B cell (primary cell): ENCODE measurements at regions of chr9 and their contacts with region 1.

Region 1: DNA sequence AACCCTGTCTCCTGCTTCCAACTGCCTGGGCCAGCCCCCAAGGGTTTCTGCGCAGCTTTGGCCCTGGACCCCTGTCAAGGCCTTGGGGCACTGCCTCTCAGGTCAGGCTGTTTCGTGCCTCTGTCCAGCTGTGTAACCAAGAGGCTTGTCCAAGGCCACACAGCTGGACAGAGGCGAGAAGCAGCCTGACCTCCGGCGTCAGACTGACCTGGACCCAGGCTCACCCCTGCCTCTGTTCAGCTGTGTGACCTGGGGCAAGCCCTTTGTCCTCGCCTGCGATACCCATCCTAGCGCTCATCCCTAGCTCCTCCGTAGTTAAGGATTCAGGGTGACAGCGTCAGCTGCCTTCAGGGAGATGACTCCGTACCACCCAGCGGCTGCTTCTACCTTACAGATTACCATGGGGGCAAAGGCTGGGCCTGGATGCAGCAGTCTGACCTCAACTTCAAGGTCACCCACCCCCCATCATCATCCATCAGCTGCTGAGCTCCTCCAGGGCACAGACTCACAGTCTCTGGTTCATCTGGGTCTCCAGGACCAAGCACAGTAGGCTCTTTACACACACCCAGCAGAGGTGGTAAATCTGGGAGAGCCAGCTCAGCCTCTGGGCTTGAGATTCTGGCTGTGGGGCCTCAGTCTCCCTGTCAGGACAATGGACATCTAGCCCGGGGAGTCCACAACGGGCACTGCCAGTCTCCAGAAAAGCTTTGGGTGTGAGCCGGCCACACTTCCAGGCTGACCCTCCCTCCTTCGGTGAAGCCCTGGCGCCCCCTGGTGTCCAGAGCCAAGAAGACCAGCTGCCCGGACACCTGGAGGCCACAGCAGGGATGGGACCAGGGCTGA is 7.9 kb downstream of the AK1 start:
- DNase-seq: peak; percentile 85
- ATAC-seq: peak; percentile 76
- H3K4me3 ChIP-seq: no peak overlapping the region
- H3K4me3 Mint-ChIP-seq: no peak overlapping the region
- H3K27ac ChIP-seq: no peak overlapping the region
- H3K27ac Mint-ChIP-seq: peak overlapping the region; percentile 53
- H3K4me1 ChIP-seq: peaks cover 16 to 29% of the 10 kb centered on the region in 2 donors
- H3K4me1 Mint-ChIP-seq: peaks cover 25% of the 10 kb centered on the region
- H3K27me3 ChIP-seq: no peaks in the 10 kb centered on the region
- H3K27me3 Mint-ChIP-seq: no peaks in the 10 kb centered on the region
- CTCF ChIP-seq: peak; percentile 92

Region 2: GRCh38 chr9:126915281-126915816 is 954.2 kb before region 1 on chr9:
- CTCF ChIA-PET with region 1: no interaction called
- POLR2A ChIA-PET with region 1: no interaction called
- intact Hi-C with region 1: no loop called
- DNase-seq: peak; percentile 74
- ATAC-seq: peak; percentile 26
- H3K4me3 ChIP-seq: peak overlapping the region in 4 of 5 experiments; percentile 22 to 63 (median 42)
- H3K4me3 Mint-ChIP-seq: peak overlapping the region; percentile 79
- H3K27ac ChIP-seq: peak overlapping the region in 1 of 2 donors; percentile 24
- H3K27ac Mint-ChIP-seq: peak overlapping the region; percentile 72
- H3K4me1 ChIP-seq: peaks cover 3 to 13% of the 10 kb centered on the region in 2 donors
- H3K4me1 Mint-ChIP-seq: peaks cover 12% of the 10 kb centered on the region
- H3K27me3 ChIP-seq: peaks cover 0 to 3% (median 0%) of the 10 kb centered on the region in 4 experiments
- H3K27me3 Mint-ChIP-seq: peaks cover 15% of the 10 kb centered on the region
- CTCF ChIP-seq: no peak

Region 3: GRCh38 chr9:127715394-127716337 is 153.9 kb before region 1 on chr9 and contains the starts of genes PTRH1 and TTC16:
- CTCF ChIA-PET with region 1: interaction called, 11 read pairs
- POLR2A ChIA-PET with region 1: no interaction called
- intact Hi-C with region 1: no loop called
- DNase-seq: peak; percentile 98
- ATAC-seq: peak; percentile 95
- H3K4me3 ChIP-seq: peak within 1 kb of the TSS; percentile 16 to 90 (median 66)
- H3K4me3 Mint-ChIP-seq: peak within 1 kb of the TSS; percentile 97
- H3K27ac ChIP-seq: peak within 1 kb of the TSS; percentile 35 to 81
- H3K27ac Mint-ChIP-seq: peak within 1 kb of the TSS; percentile 90
- H3K4me1 ChIP-seq: peaks cover 9 to 16% of the 10 kb centered on the region in 2 donors
- H3K4me1 Mint-ChIP-seq: peaks cover 26% of the 10 kb centered on the region
- H3K27me3 ChIP-seq: no peaks in the 10 kb centered on the region
- H3K27me3 Mint-ChIP-seq: no peaks in the 10 kb centered on the region
- CTCF ChIP-seq: no peak
- total RNA-seq, gene PTRH1: 6.2 and 7.6 TPM in 2 replicates
- total RNA-seq, gene TTC16: not detected in 2 replicates

Region 4: DNA sequence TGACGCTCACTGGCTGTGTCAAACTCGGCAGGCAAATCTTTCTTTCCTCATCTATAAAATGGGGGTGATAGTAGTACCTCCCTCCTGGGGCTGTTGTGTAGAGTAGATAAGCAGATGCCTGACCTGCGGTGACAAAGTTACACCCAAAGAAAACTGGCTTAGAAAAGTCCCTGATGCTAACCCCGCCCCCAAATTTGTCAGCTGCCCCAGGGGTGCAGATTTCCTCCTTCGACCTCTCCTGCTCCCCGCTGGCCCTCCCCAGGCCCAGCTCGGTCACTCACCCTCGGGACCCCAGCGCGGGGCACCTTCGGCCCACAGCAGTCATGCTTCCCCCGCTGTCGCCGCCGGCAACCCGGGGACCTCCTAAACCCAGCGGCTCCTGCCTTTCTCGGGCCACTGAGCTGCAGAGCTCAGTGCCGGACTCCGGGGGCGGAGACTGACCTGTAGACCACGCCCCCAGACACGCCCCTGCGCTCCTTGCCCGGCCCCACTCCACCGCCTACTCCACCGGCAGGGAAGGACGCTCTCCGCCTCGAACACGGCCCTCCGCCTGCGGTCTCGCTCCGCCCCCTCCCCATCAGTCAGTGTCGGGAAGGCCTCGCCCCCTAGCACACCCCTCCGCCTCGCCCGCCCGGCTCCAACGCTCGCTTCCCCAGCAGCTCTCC is 98.5 kb before region 1 on chr9:
- CTCF ChIA-PET with region 1: interaction called, 28 read pairs
- POLR2A ChIA-PET with region 1: interaction called, 4 read pairs
- intact Hi-C with region 1: no loop called
- DNase-seq: peak; percentile 95
- ATAC-seq: peak; percentile 86
- H3K4me3 ChIP-seq: peak overlapping the region; percentile 43 to 73 (median 64)
- H3K4me3 Mint-ChIP-seq: peak overlapping the region; percentile 94
- H3K27ac ChIP-seq: peak overlapping the region; percentile 77 to 94
- H3K27ac Mint-ChIP-seq: peak overlapping the region; percentile 95
- H3K4me1 ChIP-seq: peaks cover 55 to 90% of the 10 kb centered on the region in 2 donors
- H3K4me1 Mint-ChIP-seq: peaks cover 68% of the 10 kb centered on the region
- H3K27me3 ChIP-seq: no peaks in the 10 kb centered on the region
- H3K27me3 Mint-ChIP-seq: no peaks in the 10 kb centered on the region
- CTCF ChIP-seq: no peak

Region 5: GRCh38 chr9:127796225-127796813 is 73.2 kb before region 1 on chr9:
- CTCF ChIA-PET with region 1: interaction called, 12 read pairs
- POLR2A ChIA-PET with region 1: interaction called, 7 read pairs
- intact Hi-C with region 1: no loop called
- DNase-seq: no peak
- ATAC-seq: peak; percentile 29
- H3K4me3 ChIP-seq: no peak overlapping the region
- H3K4me3 Mint-ChIP-seq: peak overlapping the region; percentile 67
- H3K27ac ChIP-seq: peak overlapping the region; percentile 32 to 33
- H3K27ac Mint-ChIP-seq: peak overlapping the region; percentile 89
- H3K4me1 ChIP-seq: peaks cover 20 to 29% of the 10 kb centered on the region in 2 donors
- H3K4me1 Mint-ChIP-seq: peaks cover 29% of the 10 kb centered on the region
- H3K27me3 ChIP-seq: no peaks in the 10 kb centered on the region
- H3K27me3 Mint-ChIP-seq: no peaks in the 10 kb centered on the region
- CTCF ChIP-seq: no peak

Region 6: GRCh38 chr9:127854184-127854806 is 15.2 kb before region 1 on chr9 and contains the start of gene ENG:
- CTCF ChIA-PET with region 1: interaction called, 23 read pairs
- POLR2A ChIA-PET with region 1: interaction called, 4 read pairs
- intact Hi-C with region 1: no loop called
- DNase-seq: peak; percentile 30
- ATAC-seq: peak; percentile 46
- H3K4me3 ChIP-seq: peak within 1 kb of the TSS; percentile 45 to 92 (median 64)
- H3K4me3 Mint-ChIP-seq: peak within 1 kb of the TSS; percentile 87
- H3K27ac ChIP-seq: peak within 1 kb of the TSS; percentile 24 to 74
- H3K27ac Mint-ChIP-seq: peak within 1 kb of the TSS; percentile 82
- H3K4me1 ChIP-seq: peaks cover 36 to 57% of the 10 kb centered on the region in 2 donors
- H3K4me1 Mint-ChIP-seq: peaks cover 42% of the 10 kb centered on the region
- H3K27me3 ChIP-seq: no peaks in the 10 kb centered on the region
- H3K27me3 Mint-ChIP-seq: no peaks in the 10 kb centered on the region
- CTCF ChIP-seq: no peak
- total RNA-seq, gene ENG: 12.6 and 14.0 TPM in 2 replicates

Region 7: DNA sequence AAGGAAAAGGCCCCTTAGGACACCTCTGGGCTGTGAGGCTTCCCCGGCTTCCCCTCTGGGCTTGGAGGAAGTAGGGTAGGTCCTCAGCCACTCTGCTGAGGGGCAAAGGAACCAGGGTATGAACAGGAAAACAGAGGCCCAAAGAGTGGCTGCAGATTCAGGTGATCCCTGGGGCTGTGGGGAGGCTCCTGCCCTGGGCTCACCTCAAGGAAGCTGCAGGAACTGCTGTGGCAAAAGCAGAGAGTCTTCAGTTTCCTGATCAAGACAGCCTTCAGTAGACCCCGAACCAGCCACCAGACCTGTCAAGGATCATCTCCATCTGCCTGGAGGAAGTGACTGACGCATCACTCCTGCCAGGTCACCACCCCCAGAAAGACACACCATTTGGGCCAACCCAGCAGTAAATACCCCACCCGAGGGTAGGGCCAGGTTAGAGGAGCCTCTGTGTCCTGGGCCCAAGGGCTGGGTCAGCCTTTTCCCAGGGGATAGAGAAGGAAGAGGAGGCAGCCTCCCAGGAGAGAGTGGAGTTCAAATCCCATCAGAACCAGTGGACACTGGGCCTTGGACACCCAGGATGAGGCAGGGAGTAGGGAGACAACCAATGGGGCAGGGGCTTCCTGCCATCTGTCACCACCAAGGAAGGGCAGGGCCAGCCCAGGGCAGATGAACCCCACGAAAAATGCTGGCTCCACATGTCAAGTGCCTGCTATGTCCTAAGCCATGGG is 35.6 kb after region 1 on chr9:
- CTCF ChIA-PET with region 1: interaction called, 237 read pairs
- POLR2A ChIA-PET with region 1: interaction called, 10 read pairs
- intact Hi-C with region 1: no loop called
- DNase-seq: peak; percentile 79
- ATAC-seq: peak; percentile 43
- H3K4me3 ChIP-seq: peak overlapping the region in 4 of 5 experiments; percentile 27 to 63 (median 33)
- H3K4me3 Mint-ChIP-seq: peak overlapping the region; percentile 92
- H3K27ac ChIP-seq: peak overlapping the region; percentile 96 to 100
- H3K27ac Mint-ChIP-seq: peak overlapping the region; percentile 100
- H3K4me1 ChIP-seq: peaks cover 52 to 79% of the 10 kb centered on the region in 2 donors
- H3K4me1 Mint-ChIP-seq: peaks cover 59% of the 10 kb centered on the region
- H3K27me3 ChIP-seq: no peaks in the 10 kb centered on the region
- H3K27me3 Mint-ChIP-seq: no peaks in the 10 kb centered on the region
- CTCF ChIP-seq: no peak